ENCODE measurements at regions of chr20 and their contacts with region 1.

Region 1: GRCh38 chr20:53677447-53678314 is 84.0 kb upstream of the ZNF217 start:
- DNase-seq: peak; percentile 97 to 99
- H3K4me3 ChIP-seq: peak overlapping the region; percentile 2; the same call in 1 of the 2 replicates
- H3K4me3 Mint-ChIP-seq: peak overlapping the region; percentile 73
- H3K27ac Mint-ChIP-seq: peak overlapping the region; percentile 88
- H3K4me1 ChIP-seq: peaks cover 52% of the 10 kb centered on the region
- H3K4me1 Mint-ChIP-seq: peaks cover 43% of the 10 kb centered on the region
- H3K27me3 ChIP-seq: no peaks in the 10 kb centered on the region
- H3K27me3 Mint-ChIP-seq: no peaks in the 10 kb centered on the region
- CTCF ChIP-seq: peak; percentile 76 to 84

Region 2: DNA sequence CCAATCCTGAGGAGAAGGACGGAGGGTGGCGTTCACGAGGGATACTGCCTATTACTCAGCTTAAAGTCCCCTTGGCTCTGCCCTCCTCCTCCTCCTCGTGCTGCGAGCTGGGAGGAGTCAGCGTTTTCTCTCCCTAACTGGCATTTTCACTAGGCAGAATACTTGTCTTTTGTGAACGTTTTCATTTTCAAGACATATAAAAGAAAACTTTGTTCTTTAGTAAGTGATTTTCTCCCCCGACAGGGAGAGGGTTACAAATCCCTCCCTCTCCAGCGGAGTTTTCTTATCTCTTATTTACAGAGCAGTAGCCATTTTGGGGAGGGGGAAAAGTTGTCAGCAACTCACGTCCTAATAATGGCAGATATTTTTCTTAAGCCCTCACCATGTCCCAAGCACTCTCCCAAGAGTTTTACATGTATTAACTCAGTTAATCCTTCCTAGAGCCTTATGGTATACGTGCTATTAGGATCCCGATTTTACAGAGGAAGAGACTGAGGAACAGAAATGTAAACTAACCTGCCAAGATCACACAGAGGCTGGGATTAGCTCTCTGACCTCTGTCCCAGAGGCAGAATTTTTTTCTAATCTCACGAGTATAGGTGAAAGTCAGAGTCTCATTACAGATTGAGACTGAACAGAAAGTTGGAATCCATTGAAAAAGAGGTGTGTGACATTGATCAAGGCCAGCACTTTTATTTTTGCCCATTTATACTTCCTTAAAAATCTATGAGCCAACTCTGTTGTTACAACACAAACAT is 54.0 kb before region 1 on chr20:
- CTCF ChIA-PET with region 1: interaction called, 23 read pairs
- POLR2A ChIA-PET with region 1: interaction called, 10 read pairs
- intact Hi-C with region 1: loop called (anchors 1 kb)
- DNase-seq: peak; percentile 86 to 89
- H3K4me3 ChIP-seq: peak overlapping the region; percentile 41
- H3K4me3 Mint-ChIP-seq: peak overlapping the region; percentile 83
- H3K27ac Mint-ChIP-seq: peak overlapping the region; percentile 97
- H3K4me1 ChIP-seq: peaks cover 33% of the 10 kb centered on the region
- H3K4me1 Mint-ChIP-seq: peaks cover 24% of the 10 kb centered on the region
- H3K27me3 ChIP-seq: no peaks in the 10 kb centered on the region
- H3K27me3 Mint-ChIP-seq: no peaks in the 10 kb centered on the region
- CTCF ChIP-seq: peak in 1 of 2 experiments; percentile 35

Region 3: GRCh38 chr20:53660078-53660909 is 17.4 kb before region 1 on chr20:
- CTCF ChIA-PET with region 1: interaction called, 9 read pairs
- POLR2A ChIA-PET with region 1: interaction called, 22 read pairs
- intact Hi-C with region 1: no loop called
- DNase-seq: peak in 1 of 2 experiments; percentile 16
- H3K4me3 ChIP-seq: no peak overlapping the region
- H3K4me3 Mint-ChIP-seq: no peak overlapping the region
- H3K27ac Mint-ChIP-seq: peak overlapping the region; percentile 67
- H3K4me1 ChIP-seq: peaks cover 29% of the 10 kb centered on the region
- H3K4me1 Mint-ChIP-seq: peaks cover 53% of the 10 kb centered on the region
- H3K27me3 ChIP-seq: no peaks in the 10 kb centered on the region
- H3K27me3 Mint-ChIP-seq: no peaks in the 10 kb centered on the region
- CTCF ChIP-seq: no peak

Region 4: GRCh38 chr20:53763707-53764414 is 86.2 kb after region 1 on chr20:
- CTCF ChIA-PET with region 1: interaction called, 11 read pairs
- POLR2A ChIA-PET with region 1: interaction called, 4 read pairs
- intact Hi-C with region 1: loop called (anchors 1 kb)
- DNase-seq: peak; percentile 95 to 97
- H3K4me3 ChIP-seq: peak overlapping the region; percentile 26
- H3K4me3 Mint-ChIP-seq: peak overlapping the region; percentile 82
- H3K27ac Mint-ChIP-seq: peak overlapping the region; percentile 99
- H3K4me1 ChIP-seq: peaks cover 61% of the 10 kb centered on the region
- H3K4me1 Mint-ChIP-seq: peaks cover 55% of the 10 kb centered on the region
- H3K27me3 ChIP-seq: no peaks in the 10 kb centered on the region
- H3K27me3 Mint-ChIP-seq: no peaks in the 10 kb centered on the region
- CTCF ChIP-seq: peak; percentile 33 to 35

Region 5: GRCh38 chr20:53800808-53801604 is 123.3 kb after region 1 on chr20:
- CTCF ChIA-PET with region 1: no interaction called
- POLR2A ChIA-PET with region 1: no interaction called
- intact Hi-C with region 1: loop called (anchors 1 kb)
- DNase-seq: peak; percentile 97 to 99
- H3K4me3 ChIP-seq: peak overlapping the region; percentile 21
- H3K4me3 Mint-ChIP-seq: peak overlapping the region; percentile 74
- H3K27ac Mint-ChIP-seq: peak overlapping the region; percentile 95
- H3K4me1 ChIP-seq: peaks cover 54% of the 10 kb centered on the region
- H3K4me1 Mint-ChIP-seq: peaks cover 67% of the 10 kb centered on the region
- H3K27me3 ChIP-seq: no peaks in the 10 kb centered on the region
- H3K27me3 Mint-ChIP-seq: no peaks in the 10 kb centered on the region
- CTCF ChIP-seq: no peak

Region 6: GRCh38 chr20:53857723-53858236 is 180.1 kb after region 1 on chr20:
- CTCF ChIA-PET with region 1: no interaction called
- POLR2A ChIA-PET with region 1: no interaction called
- intact Hi-C with region 1: no loop called
- DNase-seq: no peak
- H3K4me3 ChIP-seq: no peak overlapping the region
- H3K4me3 Mint-ChIP-seq: no peak overlapping the region
- H3K27ac Mint-ChIP-seq: no peak overlapping the region
- H3K4me1 ChIP-seq: peaks cover 11% of the 10 kb centered on the region
- H3K4me1 Mint-ChIP-seq: peaks cover 39% of the 10 kb centered on the region
- H3K27me3 ChIP-seq: no peaks in the 10 kb centered on the region
- H3K27me3 Mint-ChIP-seq: no peaks in the 10 kb centered on the region
- CTCF ChIP-seq: no peak

Region 7: DNA sequence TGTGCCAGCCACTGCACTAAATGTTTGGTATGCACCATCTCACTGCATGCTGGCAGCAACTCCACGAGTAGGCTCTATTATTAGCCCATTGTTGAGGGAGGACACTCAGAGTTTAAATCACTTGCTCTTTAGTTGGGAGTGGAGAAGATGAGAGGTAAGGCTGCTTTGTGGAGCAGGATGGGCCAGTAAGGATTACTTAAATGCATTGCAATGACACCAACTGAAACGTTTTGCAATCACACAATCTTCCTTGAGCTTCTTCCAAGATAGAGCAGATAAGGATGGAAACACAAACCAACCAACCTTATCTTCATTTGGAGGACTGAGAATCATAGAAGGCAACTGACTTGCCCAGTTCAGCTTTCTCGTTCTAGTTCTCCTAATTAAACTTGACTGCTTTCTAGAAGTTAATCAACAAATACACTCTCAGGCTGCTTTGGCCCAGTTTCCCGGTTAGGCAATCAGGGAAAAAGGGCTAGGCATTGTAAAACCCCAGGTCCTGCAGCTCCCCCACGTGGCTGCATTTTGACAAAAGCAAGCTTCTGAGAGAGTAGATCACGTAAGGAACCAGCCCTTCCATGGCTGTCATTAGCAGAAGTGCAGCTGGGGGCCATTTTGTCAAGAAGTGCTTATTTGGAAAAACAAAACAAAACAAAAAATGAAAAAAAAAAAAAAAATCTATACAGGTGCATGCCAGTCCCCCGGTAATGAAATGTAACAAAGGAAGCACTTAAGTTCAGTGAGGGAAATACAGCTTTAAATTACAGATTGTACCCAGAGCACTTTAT is 262.1 kb after region 1 on chr20:
- CTCF ChIA-PET with region 1: interaction called, 12 read pairs
- POLR2A ChIA-PET with region 1: no interaction called
- intact Hi-C with region 1: no loop called
- DNase-seq: peak; percentile 95 to 96
- H3K4me3 ChIP-seq: no peak overlapping the region
- H3K4me3 Mint-ChIP-seq: no peak overlapping the region
- H3K27ac Mint-ChIP-seq: no peak overlapping the region
- H3K4me1 ChIP-seq: peaks cover 30% of the 10 kb centered on the region
- H3K4me1 Mint-ChIP-seq: peaks cover 35% of the 10 kb centered on the region
- H3K27me3 ChIP-seq: no peaks in the 10 kb centered on the region; the same call in 1 of the 2 replicates
- H3K27me3 Mint-ChIP-seq: no peaks in the 10 kb centered on the region
- CTCF ChIP-seq: peak; percentile 93 to 98

Region 8: GRCh38 chr20:55375920-55376319 is 1698.2 kb after region 1 on chr20:
- CTCF ChIA-PET with region 1: no interaction called
- POLR2A ChIA-PET with region 1: no interaction called
- intact Hi-C with region 1: no loop called
- DNase-seq: no peak
- H3K4me3 ChIP-seq: no peak overlapping the region
- H3K4me3 Mint-ChIP-seq: no peak overlapping the region
- H3K27ac Mint-ChIP-seq: no peak overlapping the region
- H3K4me1 ChIP-seq: no peaks in the 10 kb centered on the region
- H3K4me1 Mint-ChIP-seq: no peaks in the 10 kb centered on the region
- H3K27me3 ChIP-seq: no peaks in the 10 kb centered on the region
- H3K27me3 Mint-ChIP-seq: peaks cover 6% of the 10 kb centered on the region
- CTCF ChIP-seq: no peak